AG04449 (cell line): ENCODE measurements at regions of chr2 and their contacts with region 1.

Region 1: DNA sequence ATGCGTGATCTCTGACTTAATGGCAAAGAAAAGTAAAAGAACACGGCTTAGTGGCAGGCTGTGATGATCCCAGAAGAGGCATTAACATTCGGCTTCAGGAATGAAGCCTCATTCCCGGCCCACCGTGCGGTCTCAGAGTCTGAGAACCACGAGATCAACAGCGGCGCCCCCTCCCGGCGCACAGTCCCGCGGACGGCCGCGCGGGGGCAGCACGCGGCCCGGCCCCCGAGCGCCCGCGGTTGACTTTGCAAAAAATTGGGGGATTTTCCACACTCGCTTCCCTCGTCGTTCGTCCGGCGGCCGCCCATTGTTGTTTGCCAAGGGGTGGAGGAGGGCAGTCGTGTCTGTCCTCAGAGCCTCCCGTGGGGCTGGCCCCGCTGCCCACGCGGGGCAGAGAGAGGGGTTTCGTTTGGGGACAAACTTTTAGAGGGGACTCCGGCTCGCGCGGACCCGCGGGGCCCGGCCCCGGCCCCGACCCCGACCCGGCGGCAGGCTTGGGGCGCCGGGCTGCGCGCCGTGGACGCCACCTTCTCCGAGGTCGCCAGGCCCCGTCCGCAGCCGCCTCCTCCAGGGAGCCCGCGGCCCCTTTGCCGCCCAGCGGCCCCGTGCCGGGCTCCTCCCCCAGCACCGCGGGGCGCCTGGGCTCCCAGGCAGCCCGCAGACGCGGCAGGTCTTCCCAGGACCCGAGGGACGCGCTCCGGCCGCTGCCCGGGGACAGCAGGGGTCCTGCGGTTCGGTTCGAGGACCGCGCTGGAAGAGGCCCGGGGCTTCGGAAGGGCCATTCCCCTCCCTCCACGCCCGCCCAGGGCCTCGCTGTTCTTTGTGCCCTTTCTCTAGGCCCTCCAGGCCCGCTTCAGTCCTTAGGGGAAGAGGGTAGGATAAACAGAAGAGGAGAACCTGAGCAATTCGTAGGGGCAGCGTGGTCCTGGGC is 3.4 kb upstream of the HS6ST1 start:
- DNase-seq: no peak
- H3K4me3 ChIP-seq: peak overlapping the region; percentile 61
- CTCF ChIP-seq: peak; percentile 76

Region 2: GRCh38 chr2:128178650-128179460 is 143.2 kb before region 1 on chr2:
- CTCF ChIA-PET with region 1: interaction called, 17 read pairs
- POLR2A ChIA-PET with region 1: no interaction called
- DNase-seq: no peak
- H3K4me3 ChIP-seq: no peak overlapping the region
- CTCF ChIP-seq: peak; percentile 81

Region 3: GRCh38 chr2:128305159-128306087 is 16.6 kb before region 1 on chr2:
- CTCF ChIA-PET with region 1: interaction called, 18 read pairs
- POLR2A ChIA-PET with region 1: no interaction called
- DNase-seq: peak; percentile 89
- H3K4me3 ChIP-seq: peak overlapping the region; percentile 9; the same call in 1 of the 2 replicates
- CTCF ChIP-seq: no peak

Region 4: GRCh38 chr2:128354726-128355470 is 32.8 kb after region 1 on chr2:
- CTCF ChIA-PET with region 1: no interaction called
- POLR2A ChIA-PET with region 1: no interaction called
- DNase-seq: peak; percentile 46
- H3K4me3 ChIP-seq: no peak overlapping the region
- CTCF ChIP-seq: peak; percentile 62

Region 5: GRCh38 chr2:128754246-128754724 is 432.2 kb after region 1 on chr2:
- CTCF ChIA-PET with region 1: interaction called, 10 read pairs
- POLR2A ChIA-PET with region 1: no interaction called
- DNase-seq: no peak
- H3K4me3 ChIP-seq: no peak overlapping the region
- CTCF ChIP-seq: no peak